Dorsolateral prefrontal cortex (tissue), 120 donors: ENCODE measurements at regions of chr2 and their contacts with region 1.

Region 1: DNA sequence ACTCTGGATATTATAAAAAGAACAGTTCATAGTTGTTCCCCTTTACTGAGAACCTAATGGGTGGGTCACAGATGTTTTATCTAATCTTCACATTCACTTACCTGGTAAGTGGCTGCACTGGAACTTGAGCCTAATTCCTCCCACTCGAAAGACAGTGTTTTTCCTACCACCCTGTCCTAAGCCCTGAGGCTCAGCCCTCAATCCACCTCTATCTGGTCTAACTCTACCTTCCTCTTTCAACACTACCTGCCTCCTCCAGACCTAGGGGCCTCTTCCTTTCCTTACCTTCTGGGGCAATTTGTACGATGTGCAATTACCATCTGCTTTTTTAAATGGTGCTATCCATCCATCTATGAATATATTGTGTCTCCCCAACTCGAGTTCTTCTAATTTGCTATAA is 9.7 kb upstream of the KIF3C start:
- DNase-seq: no peak
- H3K4me3 ChIP-seq: peak overlapping the region in 28 of 59 donors; percentile 15 to 63 (median 50)
- H3K27ac ChIP-seq: peak overlapping the region in 7 of 59 donors; percentile 3 to 54 (median 23)
- H3K27me3 ChIP-seq: no peaks in the 10 kb centered on the region
- CTCF ChIP-seq: no peak

Region 2: GRCh38 chr2:25941042-25941441 is 50.9 kb before region 1 on chr2:
- intact Hi-C with region 1: no loop called
- DNase-seq: no peak
- H3K4me3 ChIP-seq: no peak overlapping the region
- H3K27ac ChIP-seq: no peak overlapping the region
- H3K27me3 ChIP-seq: no peaks in the 10 kb centered on the region
- CTCF ChIP-seq: no peak

Region 3: DNA sequence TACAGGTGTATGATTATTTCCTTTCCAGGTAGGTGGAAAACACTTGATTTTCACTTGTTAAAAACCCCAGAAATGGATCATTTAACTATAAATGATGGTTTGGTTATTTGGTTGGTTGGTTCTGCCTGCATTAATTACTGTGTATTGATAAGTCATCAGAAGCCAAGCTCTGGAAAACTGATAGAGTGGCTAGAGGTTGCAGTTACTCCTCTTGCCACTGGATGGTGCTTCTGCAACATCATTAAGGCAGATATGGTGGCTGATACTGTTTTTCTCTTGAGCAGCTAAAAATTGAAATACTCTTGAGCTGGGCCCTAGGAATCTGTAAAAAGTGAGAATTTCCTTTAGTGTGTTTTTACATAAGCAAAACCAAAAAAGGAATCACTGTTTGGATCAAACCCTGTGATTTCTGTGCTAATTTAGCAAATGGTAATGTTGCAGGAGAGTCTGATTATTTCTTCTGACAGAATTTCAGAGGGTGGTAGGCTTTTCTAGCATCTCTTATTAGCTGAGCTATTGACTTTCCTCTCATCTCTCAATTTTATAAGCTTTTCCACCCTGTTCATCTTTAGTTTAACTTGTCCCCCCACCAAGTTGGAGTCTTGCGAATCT is 96.2 kb after region 1 on chr2:
- intact Hi-C with region 1: loop called in 1 of 2 experiments (anchors 5 kb)
- DNase-seq: peak in 4 of 10 donors; percentile 10 to 42 (median 30)
- H3K4me3 ChIP-seq: peak overlapping the region in 1 of 59 donors; percentile 3
- H3K27ac ChIP-seq: peak overlapping the region in 44 of 59 donors; percentile 3 to 69 (median 48)
- H3K27me3 ChIP-seq: no peaks in the 10 kb centered on the region
- CTCF ChIP-seq: peak; percentile 45 to 95 (median 87)